Activated CD4-positive, alpha-beta memory T cell treated with anti-CD3 and anti-CD28 coated beads, Interleukin-2, amount 10 ng/mL, durations not matched to agents 7 days and 5 days (primary cell): ENCODE measurements at regions of chr2 and their contacts with region 1.

Region 1: GRCh38 chr2:85888684-85889626 is at the start of gene ST3GAL5:
- DNase-seq: peak; percentile 92
- H3K4me3 Mint-ChIP-seq: peak within 1 kb of the TSS; percentile 84
- H3K27ac Mint-ChIP-seq: peak within 1 kb of the TSS; percentile 79
- H3K4me1 Mint-ChIP-seq: peaks cover 68% of the 10 kb centered on the region
- H3K27me3 Mint-ChIP-seq: peaks cover 3% of the 10 kb centered on the region
- total RNA-seq, gene ST3GAL5: 58.3 to 67.1 TPM

Region 2: GRCh38 chr2:85826990-85827878 is 61.7 kb before region 1 on chr2:
- CTCF ChIA-PET with region 1: interaction called, 92 read pairs
- POLR2A ChIA-PET with region 1: interaction called, 57 read pairs
- DNase-seq: peak; percentile 87
- H3K4me3 Mint-ChIP-seq: no peak overlapping the region
- H3K27ac Mint-ChIP-seq: no peak overlapping the region
- H3K4me1 Mint-ChIP-seq: peaks cover 33% of the 10 kb centered on the region
- H3K27me3 Mint-ChIP-seq: peaks cover 24% of the 10 kb centered on the region

Region 3: GRCh38 chr2:85858841-85859240 is 30.1 kb before region 1 on chr2:
- CTCF ChIA-PET with region 1: interaction called, 42 read pairs
- POLR2A ChIA-PET with region 1: interaction called, 59 read pairs
- DNase-seq: no peak
- H3K4me3 Mint-ChIP-seq: no peak overlapping the region
- H3K27ac Mint-ChIP-seq: no peak overlapping the region
- H3K4me1 Mint-ChIP-seq: peaks cover 69% of the 10 kb centered on the region
- H3K27me3 Mint-ChIP-seq: no peaks in the 10 kb centered on the region

Region 4: DNA sequence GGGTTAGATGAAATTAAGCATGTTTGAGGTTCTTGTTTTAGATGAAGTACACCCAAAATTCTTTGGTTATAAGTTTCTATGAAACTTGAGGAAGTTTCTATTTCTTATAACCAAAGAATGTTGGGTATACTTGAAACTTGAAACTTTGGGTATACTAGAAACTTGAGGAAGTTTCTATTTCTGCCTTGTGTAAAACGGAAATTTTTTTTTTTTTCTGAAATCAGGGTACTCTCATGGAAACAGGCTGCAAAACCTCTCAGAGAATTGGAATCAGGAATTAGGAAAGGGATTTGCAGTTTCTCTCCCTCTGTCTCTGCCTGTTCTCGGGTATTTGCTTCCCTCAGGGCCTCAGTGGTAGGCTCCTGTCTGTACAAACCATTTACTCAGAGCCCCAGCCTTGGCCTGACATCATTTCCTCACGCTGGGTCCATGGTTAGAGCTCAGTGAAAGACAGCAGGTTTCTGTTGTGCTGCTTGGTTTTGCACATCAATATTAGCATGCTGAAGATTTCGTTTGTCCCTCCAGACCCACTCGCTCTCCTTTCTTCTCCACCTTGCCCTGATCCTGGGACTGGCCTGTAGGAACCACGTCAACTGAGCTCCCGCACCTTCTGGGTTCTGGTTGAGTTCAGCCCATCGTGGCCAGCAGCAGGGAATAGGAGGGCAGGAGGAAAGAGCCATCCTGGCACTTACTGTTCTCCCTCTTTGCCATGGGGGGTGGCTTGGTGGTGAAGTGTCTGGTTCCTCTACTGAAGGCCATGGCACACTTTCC is 110.3 kb after region 1 on chr2:
- CTCF ChIA-PET with region 1: interaction called, 28 read pairs
- POLR2A ChIA-PET with region 1: interaction called, 7 read pairs
- DNase-seq: peak; percentile 74
- H3K4me3 Mint-ChIP-seq: peak overlapping the region; percentile 3
- H3K27ac Mint-ChIP-seq: peak overlapping the region; percentile 91
- H3K4me1 Mint-ChIP-seq: peaks cover 74% of the 10 kb centered on the region
- H3K27me3 Mint-ChIP-seq: no peaks in the 10 kb centered on the region

Region 5: DNA sequence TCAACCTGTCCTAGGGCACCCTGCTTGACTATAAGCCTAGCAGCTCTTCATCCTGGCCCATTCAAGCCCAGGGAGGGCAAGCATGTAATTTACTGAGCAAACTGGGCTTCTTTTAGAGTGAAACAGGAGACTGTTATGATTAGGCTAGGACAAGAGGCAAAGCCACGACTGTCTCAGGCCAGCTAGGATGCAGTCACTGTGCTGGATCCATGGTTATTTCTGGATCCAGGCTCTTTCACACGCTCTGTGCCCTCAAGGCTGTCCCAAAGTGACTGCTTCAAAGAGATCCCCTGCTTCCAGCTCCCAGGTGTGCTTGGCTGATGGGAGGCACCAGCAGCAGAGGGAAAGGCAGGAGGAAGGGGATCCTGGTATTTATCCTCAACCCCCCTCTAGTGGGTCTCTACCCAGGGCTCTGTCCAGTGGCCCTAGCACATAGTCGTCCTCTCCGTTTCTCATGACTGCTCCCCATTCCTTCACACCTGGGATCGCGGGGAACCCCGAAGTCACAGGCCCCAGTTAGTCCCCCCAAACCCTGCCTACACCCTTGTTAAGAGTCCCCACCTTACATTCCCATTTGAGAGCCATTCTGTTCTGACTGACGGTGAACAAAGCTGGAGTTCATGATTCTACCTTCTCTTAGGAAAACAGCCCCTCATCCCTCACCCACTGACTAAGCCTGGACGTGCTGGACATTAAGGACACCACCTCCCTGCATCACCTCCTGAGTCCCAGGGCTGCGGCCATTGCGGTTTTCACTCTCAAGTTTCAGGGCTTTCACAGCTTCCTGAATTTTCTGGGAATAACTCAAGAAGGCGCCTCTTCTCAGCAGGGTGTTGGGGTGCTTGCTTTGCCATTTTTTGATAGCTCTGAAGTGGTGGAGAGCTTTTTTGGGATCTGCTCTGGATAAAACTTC is 153.6 kb after region 1 on chr2:
- CTCF ChIA-PET with region 1: interaction called, 132 read pairs
- POLR2A ChIA-PET with region 1: interaction called, 64 read pairs
- DNase-seq: peak; percentile 7
- H3K4me3 Mint-ChIP-seq: no peak overlapping the region
- H3K27ac Mint-ChIP-seq: peak overlapping the region; percentile 23
- H3K4me1 Mint-ChIP-seq: peaks cover 45% of the 10 kb centered on the region
- H3K27me3 Mint-ChIP-seq: no peaks in the 10 kb centered on the region

Region 6: GRCh38 chr2:86105252-86105968 is 216.5 kb after region 1 on chr2 and contains the start of gene POLR1A:
- CTCF ChIA-PET with region 1: interaction called, 6 read pairs
- POLR2A ChIA-PET with region 1: interaction called, 15 read pairs
- DNase-seq: peak; percentile 89
- H3K4me3 Mint-ChIP-seq: peak within 1 kb of the TSS; percentile 80
- H3K27ac Mint-ChIP-seq: peak within 1 kb of the TSS; percentile 92
- H3K4me1 Mint-ChIP-seq: peaks cover 58% of the 10 kb centered on the region
- H3K27me3 Mint-ChIP-seq: no peaks in the 10 kb centered on the region
- total RNA-seq, gene POLR1A: 25.2 to 29.7 TPM